ENCODE measurements at regions of chr3 and their contacts with region 1.

Region 1: GRCh38 chr3:126134219-126134975 is 46.0 kb downstream of the ALDH1L1 start:
- DNase-seq: peak; percentile 36
- ATAC-seq: peak; percentile 94
- H3K4me3 ChIP-seq: no peak overlapping the region
- H3K27ac ChIP-seq: no peak overlapping the region
- H3K4me1 ChIP-seq: no peaks in the 10 kb centered on the region
- H3K27me3 ChIP-seq: peaks cover 39% of the 10 kb centered on the region
- CTCF ChIP-seq: peak; percentile 80
- POLR2A ChIP-seq: no peak
- RAD21 ChIP-seq: peak; percentile 90

Region 2: GRCh38 chr3:125967138-125967537 is 167.3 kb before region 1 on chr3:
- CTCF ChIA-PET with region 1: no interaction called
- POLR2A ChIA-PET with region 1: no interaction called
- dilution Hi-C with region 1: no loop called
- in situ Hi-C with region 1: no loop called
- intact Hi-C with region 1: loop called (anchors 5 kb)
- DNase-seq: no peak
- ATAC-seq: no peak
- H3K4me3 ChIP-seq: no peak overlapping the region
- H3K27ac ChIP-seq: no peak overlapping the region
- H3K4me1 ChIP-seq: no peaks in the 10 kb centered on the region
- H3K27me3 ChIP-seq: peaks cover 34% of the 10 kb centered on the region
- CTCF ChIP-seq: no peak
- POLR2A ChIP-seq: no peak
- RAD21 ChIP-seq: no peak

Region 3: GRCh38 chr3:126005951-126006350 is 128.4 kb before region 1 on chr3:
- CTCF ChIA-PET with region 1: no interaction called
- POLR2A ChIA-PET with region 1: no interaction called
- dilution Hi-C with region 1: no loop called
- in situ Hi-C with region 1: no loop called
- intact Hi-C with region 1: no loop called
- DNase-seq: peak; percentile 82
- ATAC-seq: peak; percentile 64
- H3K4me3 ChIP-seq: no peak overlapping the region
- H3K27ac ChIP-seq: no peak overlapping the region
- H3K4me1 ChIP-seq: peaks cover 2% of the 10 kb centered on the region; the same call in 1 of the 2 replicates
- H3K27me3 ChIP-seq: no peaks in the 10 kb centered on the region
- CTCF ChIP-seq: no peak
- POLR2A ChIP-seq: no peak
- RAD21 ChIP-seq: no peak

Region 4: DNA sequence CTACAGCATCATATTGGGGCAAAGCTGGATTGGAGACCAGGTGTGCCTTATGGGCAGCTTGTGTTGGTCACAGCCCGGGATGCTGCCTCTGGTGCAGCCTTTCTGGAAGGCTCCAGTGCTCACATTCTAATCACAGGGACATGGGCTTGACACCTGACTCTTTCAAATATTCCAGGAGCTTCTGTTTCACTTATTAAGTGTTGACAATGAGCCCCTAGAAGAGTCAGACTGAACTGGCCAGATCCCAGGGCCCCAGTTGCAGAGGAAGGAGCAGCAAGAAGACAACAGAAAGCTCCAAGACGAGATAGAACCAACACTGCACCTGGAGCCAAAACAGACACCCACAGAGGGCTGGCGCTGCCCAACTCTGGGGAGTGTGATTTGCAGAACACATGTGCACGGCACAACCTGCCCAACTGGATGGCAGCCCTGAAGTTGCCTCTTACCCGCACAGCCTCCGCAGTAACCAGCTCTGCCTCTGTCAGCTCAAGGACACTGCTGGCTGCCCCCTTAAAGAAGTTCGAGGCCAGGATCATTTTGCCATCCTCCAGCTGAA is 15.6 kb after region 1 on chr3:
- CTCF ChIA-PET with region 1: interaction called, 10 read pairs
- POLR2A ChIA-PET with region 1: no interaction called
- dilution Hi-C with region 1: no loop called
- in situ Hi-C with region 1: no loop called
- intact Hi-C with region 1: no loop called
- DNase-seq: no peak
- ATAC-seq: no peak
- H3K4me3 ChIP-seq: no peak overlapping the region
- H3K27ac ChIP-seq: no peak overlapping the region
- H3K4me1 ChIP-seq: no peaks in the 10 kb centered on the region
- H3K27me3 ChIP-seq: peaks cover 26% of the 10 kb centered on the region
- CTCF ChIP-seq: no peak
- POLR2A ChIP-seq: no peak
- RAD21 ChIP-seq: no peak

Region 5: DNA sequence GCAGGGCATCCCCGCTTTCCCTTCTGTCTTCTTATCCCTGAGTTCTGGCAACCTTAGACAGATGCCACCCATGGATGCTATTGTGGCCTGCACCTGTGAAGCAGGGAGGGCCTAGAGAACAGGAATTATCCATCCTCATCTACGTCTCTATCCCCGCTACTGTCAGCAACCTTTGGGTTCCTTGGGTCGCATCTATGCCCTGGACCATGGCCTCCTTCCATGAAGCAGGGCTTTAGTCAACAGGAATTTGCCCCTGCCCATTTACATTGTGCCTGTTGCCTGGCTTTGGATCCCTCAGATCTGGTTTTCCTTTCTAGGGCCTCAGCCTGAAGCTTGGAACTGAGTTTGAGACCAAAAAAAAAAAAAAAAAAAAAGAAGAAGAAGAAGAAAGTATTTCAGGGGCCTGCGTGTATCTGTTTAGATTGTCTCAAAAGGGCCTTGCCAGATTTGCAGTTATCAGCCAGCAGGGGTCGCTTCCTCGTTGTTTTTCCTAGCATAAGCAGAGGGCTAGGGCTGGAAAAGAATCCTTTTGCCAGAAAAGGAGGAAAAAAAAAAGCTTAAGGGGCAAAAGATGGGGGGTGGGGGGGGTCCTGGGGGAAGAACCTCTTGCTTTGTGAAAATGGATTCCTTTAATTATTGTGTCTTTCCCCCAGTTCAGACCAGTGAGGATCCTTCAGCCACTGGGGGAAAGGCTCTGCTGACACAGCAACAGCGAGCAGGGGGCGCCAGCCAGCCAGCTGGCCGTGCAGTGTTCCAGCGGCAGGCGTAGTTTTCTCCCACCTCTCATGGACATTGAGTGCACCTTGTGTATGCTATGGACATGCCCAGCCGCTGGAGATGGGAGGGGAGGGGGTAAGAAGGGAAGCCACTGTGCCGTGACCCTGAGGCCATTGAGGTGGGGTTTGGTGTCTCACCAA is 111.7 kb after region 1 on chr3:
- CTCF ChIA-PET with region 1: no interaction called
- POLR2A ChIA-PET with region 1: no interaction called
- dilution Hi-C with region 1: no loop called
- in situ Hi-C with region 1: no loop called
- intact Hi-C with region 1: loop called (anchors 1 kb)
- DNase-seq: peak; percentile 65
- ATAC-seq: peak; percentile 87
- H3K4me3 ChIP-seq: no peak overlapping the region
- H3K27ac ChIP-seq: no peak overlapping the region
- H3K4me1 ChIP-seq: no peaks in the 10 kb centered on the region
- H3K27me3 ChIP-seq: peaks cover 28% of the 10 kb centered on the region
- CTCF ChIP-seq: peak; percentile 65
- POLR2A ChIP-seq: no peak
- RAD21 ChIP-seq: peak; percentile 63

Region 6: DNA sequence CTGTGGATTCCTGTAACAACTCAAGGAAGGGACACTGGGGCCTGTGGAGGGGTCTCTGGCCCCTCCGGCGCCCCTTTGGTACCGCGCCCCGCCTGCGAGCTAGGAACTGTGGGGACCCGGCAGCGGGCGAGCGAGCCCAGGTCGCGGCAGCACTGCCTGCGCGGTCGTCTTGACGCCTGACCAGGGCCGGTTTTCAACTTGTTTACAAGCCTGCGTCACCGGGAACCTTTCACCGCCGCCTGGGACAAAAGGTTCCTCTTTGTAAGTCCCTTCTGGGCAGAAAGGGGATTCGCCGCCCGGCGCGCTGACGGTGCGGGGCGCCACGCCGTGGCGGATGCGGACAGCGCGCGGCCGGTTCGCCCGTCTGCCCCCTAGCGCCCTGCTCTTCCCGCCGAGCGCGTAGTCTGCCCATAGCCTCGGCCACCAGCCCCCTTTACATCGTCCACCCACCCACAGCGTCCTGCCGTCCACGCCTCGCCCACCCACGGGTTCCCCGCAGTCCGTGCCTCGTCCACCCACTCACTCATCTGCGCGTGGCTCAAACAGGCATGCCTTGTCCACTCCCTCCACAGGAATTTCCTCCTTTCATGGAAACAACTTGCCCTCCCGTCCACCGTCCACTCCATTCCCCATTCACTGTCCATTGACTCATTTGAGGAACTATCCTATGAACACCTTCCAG is 254.9 kb after region 1 on chr3:
- CTCF ChIA-PET with region 1: interaction called, 6 read pairs
- POLR2A ChIA-PET with region 1: no interaction called
- dilution Hi-C with region 1: no loop called
- in situ Hi-C with region 1: loop called (anchors 5 kb)
- intact Hi-C with region 1: loop called (anchors 1 kb)
- DNase-seq: peak; percentile 76
- ATAC-seq: peak; percentile 99
- H3K4me3 ChIP-seq: peak overlapping the region; percentile 14
- H3K27ac ChIP-seq: no peak overlapping the region
- H3K4me1 ChIP-seq: no peaks in the 10 kb centered on the region
- H3K27me3 ChIP-seq: peaks cover 27% of the 10 kb centered on the region
- CTCF ChIP-seq: peak; percentile 100; the same call in 1 of the 2 replicates
- POLR2A ChIP-seq: peak; percentile 54; the same call in 1 of the 2 replicates
- RAD21 ChIP-seq: peak; percentile 97

Region 7: GRCh38 chr3:126475413-126476114 is 341.2 kb after region 1 on chr3 and contains the start of gene ZXDC:
- CTCF ChIA-PET with region 1: no interaction called
- POLR2A ChIA-PET with region 1: no interaction called
- dilution Hi-C with region 1: no loop called
- in situ Hi-C with region 1: no loop called
- intact Hi-C with region 1: loop called (anchors 10 kb)
- DNase-seq: peak; percentile 91
- ATAC-seq: peak; percentile 90
- H3K4me3 ChIP-seq: peak within 1 kb of the TSS; percentile 77
- H3K27ac ChIP-seq: peak within 1 kb of the TSS; percentile 46
- H3K4me1 ChIP-seq: peaks cover 16% of the 10 kb centered on the region
- H3K27me3 ChIP-seq: no peaks in the 10 kb centered on the region; the same call in 1 of the 2 replicates
- CTCF ChIP-seq: peak; percentile 51
- POLR2A ChIP-seq: peak; percentile 76
- RAD21 ChIP-seq: peak; percentile 39
- total RNA-seq, gene ZXDC: 13.1 and 14.3 TPM in 2 replicates

Region 8: DNA sequence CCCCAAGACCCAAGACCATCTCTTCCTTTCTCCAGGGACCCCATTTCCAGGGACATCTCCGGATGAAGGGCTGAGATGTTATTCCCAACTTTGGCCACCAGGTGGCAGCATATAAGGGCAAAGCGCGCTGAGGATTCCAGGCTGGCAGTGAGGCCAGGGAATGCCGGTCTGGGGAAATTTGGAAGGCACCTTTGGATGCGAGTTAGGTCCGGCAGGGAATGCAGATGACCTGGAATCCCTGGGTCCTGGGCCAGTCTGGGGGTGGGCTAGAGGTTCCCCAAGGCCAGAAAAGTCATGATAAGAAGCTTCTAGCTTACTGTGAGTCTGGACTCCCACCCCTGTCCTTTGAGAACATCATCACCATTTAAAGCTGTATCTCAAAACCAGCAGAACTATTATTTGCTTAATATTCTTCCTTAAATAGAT is 388.0 kb after region 1 on chr3:
- CTCF ChIA-PET with region 1: no interaction called
- POLR2A ChIA-PET with region 1: no interaction called
- dilution Hi-C with region 1: no loop called
- in situ Hi-C with region 1: no loop called
- intact Hi-C with region 1: loop called (anchors 5 kb)
- DNase-seq: peak; percentile 33
- ATAC-seq: peak; percentile 72
- H3K4me3 ChIP-seq: no peak overlapping the region
- H3K27ac ChIP-seq: no peak overlapping the region
- H3K4me1 ChIP-seq: no peaks in the 10 kb centered on the region; the same call in 1 of the 2 replicates
- H3K27me3 ChIP-seq: peaks cover 45% of the 10 kb centered on the region
- CTCF ChIP-seq: peak; percentile 78
- POLR2A ChIP-seq: no peak
- RAD21 ChIP-seq: peak; percentile 78

Measured in IMR-90 (cell line).